G401 (cell line): ENCODE measurements at regions of chr1 and their contacts with region 1.

Region 1: DNA sequence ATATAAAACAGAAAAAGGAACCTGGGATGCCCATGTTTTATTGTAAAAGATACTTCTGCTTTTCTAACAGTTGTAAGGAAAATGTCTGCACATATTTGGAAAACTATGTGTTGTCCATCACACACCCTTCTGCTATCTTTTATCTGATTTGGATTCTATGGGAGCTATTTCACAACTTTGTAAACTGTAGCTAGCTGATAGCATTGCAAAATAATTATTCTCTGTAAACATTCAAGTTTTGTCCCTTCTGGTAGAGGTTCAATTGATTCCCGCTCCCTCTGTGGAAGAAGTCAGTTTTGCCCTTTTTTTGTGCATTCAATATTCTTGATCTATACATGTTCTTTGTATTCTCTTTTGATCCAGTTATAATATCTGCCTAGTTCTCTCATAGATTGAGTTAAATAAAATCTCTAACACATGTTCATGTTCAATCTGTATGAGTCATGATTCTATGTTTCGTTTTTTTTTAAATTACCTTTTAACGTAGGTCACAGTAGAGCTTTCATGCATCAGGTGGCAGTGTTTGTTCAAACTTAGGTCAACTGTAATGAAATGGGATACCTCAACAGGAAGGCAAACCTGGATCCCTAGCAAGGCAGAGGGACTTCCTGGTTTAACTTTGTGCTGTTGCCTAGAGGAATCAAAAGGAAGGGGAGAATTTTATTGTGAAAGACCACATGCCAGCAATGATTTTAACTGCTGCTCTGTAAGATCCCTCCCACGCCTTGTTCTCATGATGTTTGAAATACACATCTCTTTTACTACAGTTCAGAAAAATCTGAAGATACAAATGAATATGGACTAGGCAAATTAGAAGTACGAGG is 26.0 kb upstream of the BCL9 start:
- DNase-seq: peak; percentile 45

Region 2: DNA sequence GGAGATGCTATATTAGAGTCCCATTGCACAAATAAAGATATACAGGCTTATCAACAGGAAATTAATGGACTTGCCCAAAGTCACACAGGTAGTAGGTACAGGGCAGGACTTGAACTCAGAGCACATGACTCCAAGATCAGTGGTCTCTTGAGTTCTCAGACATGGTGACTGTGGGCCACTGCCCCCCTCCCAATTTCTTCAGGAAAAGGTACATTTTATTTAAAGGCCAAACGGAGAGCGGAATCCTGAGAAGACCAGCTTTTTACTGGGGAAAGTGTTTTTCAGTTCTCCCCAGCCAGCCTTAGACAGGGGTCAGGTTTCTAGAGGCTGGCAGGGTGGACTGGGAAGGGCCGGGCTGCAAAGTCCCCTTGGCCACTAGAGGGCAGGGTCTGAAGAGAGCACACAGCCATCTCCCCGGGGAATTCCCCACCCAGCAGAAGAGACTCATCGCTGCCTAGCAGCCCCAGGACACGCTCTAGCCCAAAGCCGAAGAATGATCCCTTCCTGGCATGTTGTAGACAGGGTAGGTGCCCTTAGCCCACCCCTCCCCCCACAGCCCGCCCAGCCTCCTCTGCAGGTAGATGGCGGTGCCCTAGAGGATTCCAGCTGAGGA is 125.4 kb after region 1 on chr1:
- in situ Hi-C with region 1: loop called (anchors 25 kb)
- DNase-seq: no peak

Region 3: DNA sequence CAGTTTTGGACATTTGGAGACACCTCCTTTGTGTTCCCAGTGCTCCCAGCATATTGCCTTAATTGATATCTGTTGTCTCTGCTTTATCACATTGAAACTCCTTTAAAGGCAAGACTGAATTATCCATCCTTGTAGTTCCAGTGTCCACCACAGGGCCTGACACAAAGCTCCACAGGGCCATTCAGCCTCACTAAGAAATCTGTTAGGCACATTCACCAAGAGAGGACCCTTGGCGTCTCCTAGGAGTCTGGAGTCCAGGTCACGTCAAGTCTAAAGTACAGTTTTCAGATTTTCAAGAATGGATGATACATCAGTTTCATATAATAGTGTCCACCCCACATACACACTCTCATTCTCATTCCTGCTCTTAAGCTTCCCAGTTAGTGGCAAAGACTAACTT is 150.3 kb after region 1 on chr1:
- in situ Hi-C with region 1: no loop called
- DNase-seq: no peak